ENCODE measurements at regions of chr17 and their contacts with region 1.

Region 1: DNA sequence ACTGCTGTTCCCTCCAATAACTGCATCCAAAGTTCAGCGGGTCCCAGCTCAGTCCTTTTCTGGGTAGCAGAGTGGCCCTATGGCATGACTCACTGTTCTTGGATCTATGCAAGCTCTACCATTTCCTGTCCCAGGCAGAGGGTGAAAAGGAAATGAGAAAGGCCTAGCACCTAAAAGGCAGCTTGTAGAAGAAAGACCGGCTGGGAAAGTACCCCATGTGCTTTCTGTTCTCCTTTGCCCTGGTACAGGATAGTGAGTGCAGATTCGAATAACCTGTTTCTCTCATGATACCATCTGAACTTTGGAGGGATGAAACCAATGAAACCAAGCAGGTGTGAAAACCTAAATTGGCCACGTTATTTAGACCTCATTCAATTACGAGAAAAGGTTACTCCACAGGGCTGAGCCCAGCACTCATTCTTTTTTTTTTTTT is 12.7 kb upstream of the HASPIN start:
- DNase-seq: peak; percentile 94
- H3K4me3 Mint-ChIP-seq: peak overlapping the region; percentile 59
- H3K27ac Mint-ChIP-seq: peak overlapping the region; percentile 85
- H3K4me1 Mint-ChIP-seq: peaks cover 51% of the 10 kb centered on the region
- H3K27me3 Mint-ChIP-seq: no peaks in the 10 kb centered on the region

Region 2: DNA sequence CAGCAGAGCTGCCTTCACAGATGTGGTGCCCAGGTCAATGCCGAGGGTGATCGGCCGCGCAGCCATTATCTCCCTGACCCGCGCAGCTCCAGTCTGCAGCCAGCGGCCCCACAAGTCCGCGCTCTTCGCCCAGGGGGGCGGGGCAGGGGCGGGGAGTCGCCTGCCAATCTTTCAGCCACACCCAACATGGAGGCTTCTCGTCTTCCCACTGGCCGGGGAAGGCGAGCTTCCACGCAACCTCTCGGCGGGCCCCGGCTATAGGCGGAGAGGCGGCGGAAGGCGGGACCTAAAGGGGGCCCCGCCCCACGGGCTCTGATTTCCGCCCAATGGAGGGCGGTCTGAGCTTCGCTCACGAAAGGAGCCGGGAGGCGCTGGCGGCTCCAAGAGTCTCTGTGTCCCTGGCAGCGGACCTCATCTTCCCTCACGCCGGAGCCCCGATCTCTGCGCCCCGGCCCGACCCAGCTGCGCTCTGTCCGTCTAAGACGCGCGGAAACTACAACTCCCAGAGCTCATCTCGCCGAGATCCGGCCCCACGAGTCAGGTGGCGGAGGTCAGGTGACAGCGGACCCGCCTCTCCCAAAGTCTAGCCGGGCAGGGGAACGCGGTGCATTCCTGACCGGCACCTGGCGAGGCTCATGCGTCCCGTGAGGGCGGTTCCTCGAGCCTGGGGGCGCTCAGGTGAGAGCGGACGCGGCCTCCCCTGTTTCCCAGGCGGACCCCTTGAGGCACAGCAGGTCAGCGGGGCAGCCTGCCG is 74.6 kb before region 1 on chr17 and contains the starts of genes CTNS and SHPK:
- intact Hi-C with region 1: loop called (anchors 2 kb)
- DNase-seq: peak; percentile 99
- H3K4me3 Mint-ChIP-seq: peak within 1 kb of the TSS; percentile 98
- H3K27ac Mint-ChIP-seq: peak within 1 kb of the TSS; percentile 99
- H3K4me1 Mint-ChIP-seq: peaks cover 43% of the 10 kb centered on the region
- H3K27me3 Mint-ChIP-seq: no peaks in the 10 kb centered on the region
- total RNA-seq, gene CTNS: 46.7 and 48.1 TPM in 2 replicates
- total RNA-seq, gene SHPK: 20.6 and 21.2 TPM in 2 replicates

Region 3: GRCh38 chr17:3668279-3669085 is 42.5 kb before region 1 on chr17 and contains the starts of genes EMC6 and TAX1BP3:
- intact Hi-C with region 1: loop called (anchors 1 kb)
- DNase-seq: peak; percentile 100
- H3K4me3 Mint-ChIP-seq: peak within 1 kb of the TSS; percentile 92
- H3K27ac Mint-ChIP-seq: peak within 1 kb of the TSS; percentile 93
- H3K4me1 Mint-ChIP-seq: peaks cover 25% of the 10 kb centered on the region
- H3K27me3 Mint-ChIP-seq: no peaks in the 10 kb centered on the region
- total RNA-seq, gene EMC6: 69.4 and 70.5 TPM in 2 replicates
- total RNA-seq, gene TAX1BP3: 28.7 and 29.0 TPM in 2 replicates

Region 4: DNA sequence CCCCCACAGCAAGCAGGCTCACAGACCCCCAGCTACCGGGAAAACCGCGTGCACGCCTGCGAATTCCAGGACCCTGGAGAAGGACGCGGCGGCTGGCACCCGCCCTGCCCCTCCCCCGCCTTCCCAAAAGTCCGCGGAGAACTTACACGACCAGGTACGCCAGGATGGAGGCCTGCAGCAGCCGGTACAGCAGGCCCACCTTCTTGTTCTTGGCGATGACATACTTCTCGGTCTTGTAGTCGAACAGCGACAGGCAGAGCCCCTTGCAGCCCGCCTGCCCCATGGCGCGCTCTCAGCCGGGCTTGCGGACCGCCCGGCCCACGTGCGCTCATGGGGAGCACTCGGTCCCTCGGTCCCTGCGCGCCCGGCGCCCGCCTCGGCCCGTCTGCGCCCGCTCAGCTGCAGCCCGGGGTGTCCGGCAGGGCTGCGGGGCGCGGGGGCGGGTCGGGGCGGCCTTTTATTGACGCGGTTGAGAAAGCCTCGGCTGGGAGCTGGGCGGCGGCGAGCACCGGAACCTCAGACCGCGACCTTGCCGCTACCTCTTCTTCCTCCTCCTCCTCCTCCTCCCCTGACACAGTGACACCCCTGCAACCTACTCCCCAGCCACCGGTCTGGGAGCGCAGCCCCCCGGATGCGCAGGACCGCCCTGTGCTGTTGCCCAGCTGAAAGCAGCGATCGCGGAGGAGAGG is 15.1 kb before region 1 on chr17 and contains the start of gene P2RX5:
- intact Hi-C with region 1: loop called (anchors 1 kb)
- DNase-seq: peak; percentile 86
- H3K4me3 Mint-ChIP-seq: peak within 1 kb of the TSS; percentile 96
- H3K27ac Mint-ChIP-seq: peak within 1 kb of the TSS; percentile 95
- H3K4me1 Mint-ChIP-seq: peaks cover 30% of the 10 kb centered on the region
- H3K27me3 Mint-ChIP-seq: no peaks in the 10 kb centered on the region
- total RNA-seq, gene P2RX5: 92.3 and 92.8 TPM in 2 replicates

Region 5: GRCh38 chr17:3723556-3724369 is 12.8 kb after region 1 on chr17 and contains the start of gene HASPIN:
- intact Hi-C with region 1: loop called (anchors 1 kb)
- DNase-seq: peak; percentile 98
- H3K4me3 Mint-ChIP-seq: peak within 1 kb of the TSS; percentile 87
- H3K27ac Mint-ChIP-seq: peak within 1 kb of the TSS; percentile 68
- H3K4me1 Mint-ChIP-seq: peaks cover 45% of the 10 kb centered on the region
- H3K27me3 Mint-ChIP-seq: no peaks in the 10 kb centered on the region
- total RNA-seq, gene HASPIN: 25.1 and 25.3 TPM in 2 replicates

Region 6: DNA sequence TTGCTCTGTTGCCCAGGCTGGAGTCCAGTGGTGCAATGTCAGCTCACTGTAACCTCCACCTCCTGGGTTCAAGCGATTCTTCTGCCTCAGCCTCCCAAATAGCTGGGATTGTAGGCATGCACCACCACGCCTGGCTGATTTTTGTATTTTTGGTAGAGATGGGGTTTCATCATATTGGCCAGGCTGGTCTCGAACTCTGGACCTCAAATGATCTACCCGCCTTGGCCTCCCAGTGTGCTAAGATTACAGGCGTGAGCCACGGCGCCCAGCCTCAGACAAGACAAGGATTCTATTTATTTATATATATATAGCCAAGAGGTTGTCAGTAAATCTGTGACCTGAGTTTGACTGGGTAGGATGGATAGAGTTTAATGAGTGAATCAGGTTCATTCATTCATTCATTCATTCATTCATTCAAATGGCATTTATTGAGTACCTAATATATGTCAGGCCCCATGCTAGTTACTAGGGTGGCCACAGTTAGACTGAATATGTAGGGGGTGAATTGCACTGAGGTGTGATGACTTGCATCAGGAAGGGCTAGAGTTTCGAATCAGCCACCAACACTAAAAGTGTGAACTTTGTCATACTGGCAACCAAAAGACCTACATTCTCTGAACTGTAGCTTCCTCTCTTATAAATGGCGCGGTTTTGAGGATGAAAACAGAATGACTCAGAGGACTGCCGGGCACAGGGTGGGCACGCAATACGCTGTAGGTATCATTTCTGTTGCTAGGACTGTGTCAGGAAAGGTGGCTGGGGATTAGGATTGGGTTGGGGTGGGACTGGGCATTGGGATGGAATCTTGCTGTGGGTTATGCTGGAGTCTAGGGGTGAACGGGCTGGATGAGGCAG is 52.2 kb after region 1 on chr17:
- intact Hi-C with region 1: loop called (anchors 1 kb)
- DNase-seq: peak; percentile 79
- H3K4me3 Mint-ChIP-seq: peak overlapping the region; percentile 72
- H3K27ac Mint-ChIP-seq: peak overlapping the region; percentile 89
- H3K4me1 Mint-ChIP-seq: peaks cover 45% of the 10 kb centered on the region
- H3K27me3 Mint-ChIP-seq: peaks cover 2% of the 10 kb centered on the region